Heart right ventricle (tissue), 16 donors: ENCODE measurements at regions of chr2 and their contacts with region 1.

Region 1: GRCh38 chr2:238060542-238061314 is at the start of gene SCLY:
- DNase-seq: peak; percentile 97 to 98
- ATAC-seq: peak; percentile 99 to 100 (median 100)
- H3K4me3 ChIP-seq: peak within 1 kb of the TSS; percentile 70 to 95 (median 81)
- H3K27ac ChIP-seq: peak within 1 kb of the TSS; percentile 69 to 96 (median 88)
- H3K4me1 ChIP-seq: peaks cover 2 to 25% (median 17%) of the 10 kb centered on the region in 9 donors
- H3K27me3 ChIP-seq: no peaks in the 10 kb centered on the region
- CTCF ChIP-seq: no peak
- total RNA-seq, gene SCLY: 8.3 to 14.5 (median 11.4) TPM

Region 2: GRCh38 chr2:238015705-238016104 is 45.0 kb before region 1 on chr2:
- intact Hi-C with region 1: no loop called
- DNase-seq: no peak
- ATAC-seq: no peak
- H3K4me3 ChIP-seq: no peak overlapping the region
- H3K27ac ChIP-seq: no peak overlapping the region
- H3K4me1 ChIP-seq: peaks cover 0 to 5% (median 0%) of the 10 kb centered on the region in 9 donors
- H3K27me3 ChIP-seq: no peaks in the 10 kb centered on the region
- CTCF ChIP-seq: peak in 4 of 9 donors; percentile 28 to 41 (median 32)

Region 3: DNA sequence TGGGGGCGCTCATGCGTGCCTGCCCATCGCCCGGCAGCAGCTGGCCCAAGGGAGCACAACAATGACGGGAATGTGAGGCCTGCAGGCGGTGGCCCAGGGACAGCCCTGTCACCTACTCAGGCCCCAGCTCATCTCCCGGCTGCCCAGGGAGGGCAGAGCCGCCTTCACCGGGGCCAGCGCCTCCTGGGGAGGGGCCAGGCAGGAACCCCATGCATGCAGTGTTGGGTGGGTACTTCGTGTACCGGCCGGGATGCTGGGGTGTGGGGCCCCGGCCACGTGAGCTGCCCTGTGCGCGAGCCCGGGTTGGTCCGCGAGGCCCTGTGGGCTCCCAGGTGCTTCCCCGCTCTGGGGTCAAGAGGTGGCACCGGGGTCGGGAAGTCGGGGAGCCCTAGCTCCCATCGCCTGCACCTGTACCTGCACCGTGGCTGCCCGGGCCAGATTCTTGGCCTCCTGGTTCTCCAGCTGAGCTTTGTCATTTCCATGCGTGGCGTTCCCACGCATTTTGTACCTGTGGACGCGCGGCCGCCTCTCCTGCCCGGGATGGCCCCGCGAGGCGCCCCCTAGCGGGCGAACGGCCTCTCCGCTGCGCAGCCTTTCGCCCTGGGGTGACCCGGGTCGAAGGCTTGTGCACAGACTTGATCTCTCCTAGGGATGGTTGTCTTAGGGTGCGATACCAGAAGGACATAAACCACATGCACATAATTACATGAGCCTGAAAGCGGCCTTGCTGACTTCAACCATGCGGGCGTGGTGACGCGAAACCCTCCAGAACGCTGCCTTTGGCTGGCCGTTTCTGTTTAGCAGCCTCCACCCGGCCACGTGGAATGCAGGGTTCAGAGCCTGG is 78.7 kb after region 1 on chr2:
- intact Hi-C with region 1: loop called in 1 of 10 experiments (anchors 5 kb)
- DNase-seq: no peak
- ATAC-seq: peak; percentile 25 to 68 (median 50)
- H3K4me3 ChIP-seq: peak overlapping the region; percentile 5 to 54 (median 40)
- H3K27ac ChIP-seq: peak overlapping the region; percentile 69 to 96 (median 89)
- H3K4me1 ChIP-seq: peaks cover 6 to 71% (median 51%) of the 10 kb centered on the region in 9 donors
- H3K27me3 ChIP-seq: peaks cover 0 to 2% (median 0%) of the 10 kb centered on the region in 7 donors
- CTCF ChIP-seq: peak; percentile 33 to 74 (median 64)

Region 4: GRCh38 chr2:238256594-238257104 is 195.9 kb after region 1 on chr2:
- intact Hi-C with region 1: loop called in 1 of 10 experiments (anchors 10 kb)
- DNase-seq: peak; percentile 57 to 62
- ATAC-seq: peak in 7 of 8 donors; percentile 35 to 66 (median 53)
- H3K4me3 ChIP-seq: no peak overlapping the region
- H3K27ac ChIP-seq: no peak overlapping the region
- H3K4me1 ChIP-seq: peaks cover 0 to 13% (median 7%) of the 10 kb centered on the region in 9 donors
- H3K27me3 ChIP-seq: no peaks in the 10 kb centered on the region
- CTCF ChIP-seq: peak; percentile 53 to 80 (median 72)

Region 5: GRCh38 chr2:238601433-238602222 is 540.9 kb after region 1 on chr2:
- intact Hi-C with region 1: no loop called
- DNase-seq: no peak
- ATAC-seq: peak in 4 of 8 donors; percentile 12 to 68 (median 14)
- H3K4me3 ChIP-seq: no peak overlapping the region
- H3K27ac ChIP-seq: peak overlapping the region in 6 of 10 donors; percentile 5 to 66 (median 25)
- H3K4me1 ChIP-seq: peaks cover 0 to 32% (median 21%) of the 10 kb centered on the region in 9 donors
- H3K27me3 ChIP-seq: peaks cover 0 to 4% (median 0%) of the 10 kb centered on the region in 7 donors
- CTCF ChIP-seq: no peak